ENCODE measurements at regions of chr15 and their contacts with region 1.

Region 1: DNA sequence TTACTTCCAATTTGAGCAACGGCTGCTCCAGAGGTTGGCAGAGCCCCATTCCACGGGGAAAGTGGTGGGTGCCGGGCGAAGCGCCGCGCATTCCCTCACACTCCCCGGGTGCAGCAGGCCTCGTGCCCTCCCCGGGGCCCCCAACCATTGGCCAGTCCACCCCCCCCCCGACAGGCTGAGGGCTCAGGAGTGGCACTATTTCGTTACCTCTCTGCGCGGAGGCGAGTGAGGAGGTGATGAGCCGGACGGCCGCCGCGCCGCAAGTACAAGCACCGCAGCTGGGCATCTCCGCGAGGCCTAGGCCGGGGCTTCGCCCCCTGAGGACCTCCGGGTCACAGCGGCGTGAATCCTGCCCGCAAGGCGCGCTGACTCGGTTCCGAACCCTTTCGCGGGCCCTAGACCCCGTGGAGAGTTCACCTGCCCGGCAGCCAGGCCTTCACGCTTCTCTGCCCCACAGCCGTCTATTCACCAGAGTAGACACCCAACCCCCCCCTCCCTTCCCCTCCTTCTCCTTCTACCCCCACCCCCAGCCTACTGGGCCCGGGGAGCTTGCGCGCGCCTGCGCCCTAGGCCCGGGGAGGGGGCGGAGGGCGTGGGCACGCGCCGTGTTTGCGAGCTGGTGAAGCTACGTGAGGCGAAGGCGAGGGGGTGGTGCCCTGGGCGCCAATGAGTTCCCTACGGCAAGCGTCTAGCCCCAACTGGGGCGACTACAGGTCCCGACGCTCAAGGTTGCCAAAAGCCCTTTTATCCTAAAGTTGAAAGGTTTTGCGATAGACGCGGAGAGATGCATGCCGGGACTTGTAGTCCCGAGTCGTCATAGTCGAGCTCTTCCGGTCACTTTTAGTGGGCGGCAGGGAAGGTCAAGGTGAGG is at the start of gene CLPX:
- DNase-seq: peak; percentile 78 to 98 (median 86)

Region 2: DNA sequence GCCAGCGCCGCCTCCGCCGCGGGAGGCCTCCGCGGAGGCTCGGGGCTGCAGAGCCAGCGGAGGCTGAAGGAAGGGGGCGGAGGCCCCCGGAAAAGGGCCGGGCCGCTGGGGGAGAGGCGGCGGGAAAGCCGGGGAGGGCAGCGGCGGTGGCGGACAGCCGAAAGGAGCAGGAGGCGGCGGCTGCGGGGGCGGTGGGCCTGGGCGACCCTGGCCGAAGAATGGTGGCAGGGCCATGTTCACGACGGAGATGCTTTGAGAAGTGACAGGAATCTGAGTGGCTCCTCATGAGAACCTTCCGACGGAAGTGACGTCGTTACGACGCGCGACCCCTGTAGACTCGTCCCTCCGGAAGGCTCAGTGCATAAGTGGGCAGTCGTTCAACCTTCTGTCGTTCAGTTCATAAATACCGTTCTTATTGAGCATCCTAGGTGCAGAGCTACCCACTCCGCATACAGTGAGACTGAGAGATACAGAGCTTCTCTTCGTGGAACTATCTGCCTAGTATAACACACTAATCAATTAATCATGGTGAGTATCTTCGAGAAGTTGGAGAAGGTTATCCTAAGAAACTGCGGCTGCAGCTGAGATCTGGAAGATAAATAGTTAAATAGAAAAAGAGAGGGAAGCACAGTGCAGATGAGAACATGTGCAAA is 51.4 kb before region 1 on chr15 and contains the start of gene PDCD7:
- intact Hi-C with region 1: loop called (anchors 1 kb)
- DNase-seq: peak; percentile 84 to 99 (median 92)

Region 3: DNA sequence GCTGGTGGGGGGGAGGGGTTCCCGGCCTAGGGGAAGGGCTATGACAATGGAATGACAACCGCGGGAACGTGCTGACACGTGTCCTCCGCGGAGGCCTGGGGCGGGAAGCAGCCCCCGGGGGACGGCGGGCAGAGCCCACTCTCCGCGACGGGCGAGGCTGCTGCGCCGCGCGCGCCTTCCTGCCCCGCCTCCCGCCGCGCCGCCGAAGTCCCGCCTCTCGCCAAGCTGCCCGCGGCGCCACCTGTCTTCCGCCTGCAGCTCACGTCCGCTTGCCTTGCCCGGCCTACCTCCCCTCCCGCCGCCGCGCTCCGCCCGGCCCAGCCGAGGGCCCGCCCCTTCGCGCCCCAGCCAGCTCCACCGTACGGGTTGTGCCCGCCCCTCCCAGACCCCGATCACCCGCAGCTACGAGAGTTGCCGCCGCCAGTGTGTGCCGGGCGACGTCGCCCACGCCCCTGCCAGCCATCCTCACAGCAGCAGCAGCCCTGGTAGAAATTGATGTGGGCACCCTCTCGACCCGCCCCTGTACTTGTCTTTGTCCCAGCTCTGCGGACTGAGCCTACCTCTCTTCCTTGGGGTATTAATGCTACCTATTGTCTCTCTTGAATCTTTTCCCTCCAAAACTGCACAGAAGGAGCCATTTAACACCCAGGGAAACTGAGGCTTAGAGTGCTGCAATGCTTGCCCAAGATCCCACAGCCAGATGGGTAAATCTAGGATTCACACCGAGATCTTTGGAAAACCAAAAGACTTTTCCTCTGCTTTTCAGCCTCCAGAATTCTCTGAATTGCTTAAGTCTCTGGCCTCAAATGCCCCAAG is 101.8 kb after region 1 on chr15 and contains the start of gene PARP16:
- intact Hi-C with region 1: no loop called
- DNase-seq: peak; percentile 80 to 99 (median 92)

Region 4: GRCh38 chr15:65302061-65302460 is 117.0 kb after region 1 on chr15:
- intact Hi-C with region 1: loop called (anchors 2 kb)
- DNase-seq: peak in 3 of 10 donors; percentile 68 to 86 (median 76)

Region 5: GRCh38 chr15:65792130-65792987 is 607.3 kb after region 1 on chr15 and contains the start of gene DENND4A:
- intact Hi-C with region 1: loop called (anchors 10 kb)
- DNase-seq: peak; percentile 96 to 100 (median 98)